Colonic mucosa (tissue), 4 donors: ENCODE measurements at regions of chr3 and their contacts with region 1.

Region 1: DNA sequence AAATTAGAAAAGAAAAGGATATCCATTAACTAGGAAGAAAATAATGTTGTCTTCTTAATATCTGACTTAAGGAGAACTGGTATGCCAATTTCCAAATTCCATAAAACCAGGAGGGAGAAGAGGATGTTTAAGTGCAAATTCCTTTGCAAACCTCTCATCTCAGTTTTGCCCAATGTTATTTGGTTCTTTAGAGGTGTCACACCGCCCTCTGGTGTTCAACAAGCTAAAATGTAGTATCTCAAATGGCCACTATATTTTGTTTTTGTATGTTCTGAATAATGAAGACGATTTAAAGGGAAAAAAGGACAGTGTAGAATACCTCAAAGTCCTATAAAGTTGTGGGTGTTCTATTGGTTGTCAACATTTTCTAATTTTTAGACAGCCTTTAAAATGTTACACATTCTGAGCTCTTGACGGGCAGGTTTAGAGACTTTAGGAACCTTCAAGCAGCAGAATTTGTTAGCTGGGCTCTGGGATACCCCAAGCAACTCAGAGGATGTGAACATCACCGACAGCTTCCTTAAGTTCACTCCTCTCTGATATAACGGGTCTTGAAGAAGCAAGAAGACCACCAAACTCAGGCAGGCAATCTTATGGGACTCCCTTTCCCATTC is 458.3 kb downstream of the MFSD1 start:
- DNase-seq: peak; percentile 58
- H3K4me3 ChIP-seq: no peak overlapping the region
- H3K27ac ChIP-seq: no peak overlapping the region
- H3K4me1 ChIP-seq: no peaks in the 10 kb centered on the region
- H3K27me3 ChIP-seq: no peaks in the 10 kb centered on the region
- CTCF ChIP-seq: peak; percentile 47

Region 2: DNA sequence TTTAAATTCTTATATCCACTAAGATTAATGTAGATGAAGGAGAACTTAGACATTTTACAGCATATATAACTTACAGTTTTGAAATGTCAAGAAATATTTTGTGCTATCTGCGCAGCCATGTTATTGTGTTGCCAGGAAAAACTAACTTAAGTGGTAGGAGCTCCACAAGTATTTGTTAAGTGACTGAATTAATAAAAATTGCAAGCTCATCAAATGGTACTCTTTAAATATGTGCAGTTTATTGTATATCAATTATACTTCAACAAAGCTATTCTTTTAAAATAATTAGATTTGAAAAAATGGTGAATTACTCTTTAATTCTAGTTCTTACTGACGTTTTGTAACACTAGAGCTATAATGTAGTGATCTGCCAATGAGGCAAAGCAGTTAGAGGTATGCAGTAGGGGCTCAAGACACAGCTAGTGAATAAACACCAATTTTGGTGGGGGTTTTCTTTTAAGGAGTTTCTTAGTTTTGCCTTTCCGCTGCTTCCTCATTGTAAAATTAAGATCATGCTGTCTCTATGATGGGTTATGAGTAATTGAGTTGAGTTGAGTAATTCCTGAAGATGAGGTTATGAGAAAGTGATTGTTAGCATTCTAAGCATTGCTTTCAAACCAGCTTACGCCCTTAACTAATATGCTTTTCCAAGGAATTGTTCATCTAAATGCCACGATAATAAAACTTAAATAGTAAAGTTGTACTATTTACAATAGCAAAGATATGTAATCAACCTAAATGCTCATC is 576.8 kb before region 1 on chr3:
- intact Hi-C with region 1: no loop called
- DNase-seq: no peak
- H3K4me3 ChIP-seq: no peak overlapping the region
- H3K27ac ChIP-seq: no peak overlapping the region
- H3K4me1 ChIP-seq: no peaks in the 10 kb centered on the region
- H3K27me3 ChIP-seq: no peaks in the 10 kb centered on the region
- CTCF ChIP-seq: no peak

Region 3: DNA sequence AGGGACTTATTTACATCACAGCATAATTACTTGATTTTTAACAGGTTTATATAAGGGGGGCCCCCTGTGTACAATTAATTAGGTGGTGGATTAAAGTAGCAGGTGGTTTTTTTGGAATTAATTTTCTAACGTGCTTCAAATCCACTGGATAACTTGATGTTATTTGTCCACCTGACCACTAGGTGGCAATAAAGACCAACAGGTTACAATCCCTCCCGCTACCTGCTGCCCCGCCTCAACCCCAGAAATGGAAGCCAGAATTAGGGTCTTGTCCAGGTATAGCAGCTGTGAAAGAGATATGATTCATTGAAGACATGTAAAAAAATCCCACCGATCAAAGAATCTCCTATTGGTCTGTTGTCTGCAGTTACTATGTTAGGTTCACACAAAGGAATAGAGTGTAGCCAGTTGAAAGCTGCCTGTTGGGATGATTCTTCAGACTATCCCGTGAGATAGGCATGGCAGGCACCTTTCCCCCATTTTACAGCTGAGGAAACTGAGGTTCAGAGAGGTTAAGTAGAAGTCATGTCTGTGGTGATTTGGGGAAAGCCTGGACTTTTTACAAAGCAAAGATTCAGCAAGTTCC is 414.3 kb before region 1 on chr3:
- intact Hi-C with region 1: loop called (anchors 2 kb)
- DNase-seq: peak; percentile 27
- H3K4me3 ChIP-seq: no peak overlapping the region
- H3K27ac ChIP-seq: no peak overlapping the region
- H3K4me1 ChIP-seq: no peaks in the 10 kb centered on the region
- H3K27me3 ChIP-seq: no peaks in the 10 kb centered on the region
- CTCF ChIP-seq: peak; percentile 56

Region 4: GRCh38 chr3:159123877-159124276 is 136.3 kb before region 1 on chr3:
- intact Hi-C with region 1: loop called (anchors 2 kb)
- DNase-seq: no peak
- H3K4me3 ChIP-seq: no peak overlapping the region
- H3K27ac ChIP-seq: no peak overlapping the region
- H3K4me1 ChIP-seq: no peaks in the 10 kb centered on the region
- H3K27me3 ChIP-seq: no peaks in the 10 kb centered on the region
- CTCF ChIP-seq: no peak

Region 5: DNA sequence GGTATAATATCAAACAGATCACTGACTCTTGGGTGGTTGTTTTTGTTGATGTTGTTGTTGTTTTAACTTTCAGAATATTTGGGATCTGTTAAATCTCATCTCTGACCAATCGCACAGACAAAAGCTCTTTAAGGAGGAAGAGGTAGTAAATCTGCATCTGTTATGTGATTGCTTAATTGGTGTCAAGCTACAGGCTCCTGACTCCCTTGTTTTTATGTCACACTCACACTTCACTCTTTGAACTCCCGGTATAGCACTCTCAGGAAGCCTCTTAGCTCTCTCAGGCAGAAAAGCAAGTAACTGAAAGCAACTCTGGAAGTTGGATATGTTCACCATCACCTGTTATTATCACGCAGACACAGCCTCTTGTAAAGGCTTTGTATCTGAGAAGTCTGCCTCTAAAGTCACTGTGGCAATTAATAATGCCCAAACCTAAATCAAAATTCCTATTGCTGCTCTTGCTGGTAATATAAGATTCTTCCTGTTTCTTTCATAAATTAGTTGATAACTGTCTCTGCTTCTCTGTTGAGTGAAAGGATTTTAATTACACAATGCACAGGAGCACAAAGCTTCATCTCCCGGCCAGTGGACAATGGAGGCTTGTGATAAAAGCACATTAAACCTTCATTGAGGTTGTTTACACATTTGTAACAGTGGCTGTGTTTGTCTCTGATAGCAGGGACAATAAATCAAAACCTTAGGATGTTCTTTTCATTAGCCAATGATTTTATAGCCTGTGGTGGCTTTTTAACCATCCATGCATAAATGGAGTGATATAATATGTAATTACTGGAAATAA is 118.4 kb after region 1 on chr3:
- intact Hi-C with region 1: no loop called
- DNase-seq: no peak
- H3K4me3 ChIP-seq: no peak overlapping the region
- H3K27ac ChIP-seq: no peak overlapping the region
- H3K4me1 ChIP-seq: no peaks in the 10 kb centered on the region
- H3K27me3 ChIP-seq: no peaks in the 10 kb centered on the region
- CTCF ChIP-seq: no peak